ENCODE measurements at regions of chr3 and their contacts with region 1.

Region 1: DNA sequence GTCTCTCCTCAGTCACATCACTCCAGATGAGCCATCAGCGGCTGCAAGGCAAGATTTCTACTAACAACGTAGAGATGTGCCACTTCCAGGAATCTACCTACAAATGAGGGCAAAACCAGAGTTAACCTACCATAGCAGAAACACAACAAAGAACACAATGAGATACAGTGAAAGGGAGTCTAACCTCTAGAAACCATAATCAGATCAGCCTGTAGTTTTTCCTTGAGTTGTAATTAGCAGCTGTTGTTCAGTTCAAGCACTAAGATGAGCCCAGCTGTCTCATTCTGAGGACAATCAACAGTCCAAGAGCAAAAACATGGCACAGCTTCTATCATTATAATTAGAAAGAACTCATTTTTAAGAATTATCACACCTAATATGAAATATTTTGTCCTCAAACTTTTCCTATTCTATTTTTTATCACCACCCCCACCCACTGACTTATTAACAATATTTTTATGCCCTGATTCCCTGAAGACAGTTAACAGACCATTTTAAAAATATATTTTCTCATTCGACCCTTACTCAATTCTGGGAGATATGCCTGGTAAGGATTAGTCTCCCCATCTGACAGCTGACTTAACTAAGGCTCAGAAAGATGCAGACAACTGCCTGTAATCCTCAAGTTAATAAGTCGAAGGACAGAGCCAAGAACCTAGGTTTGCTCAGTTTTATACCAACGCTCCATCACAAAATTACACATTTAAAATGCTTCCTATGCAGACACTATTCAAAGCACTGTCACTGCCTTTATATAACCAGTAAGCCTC is 50.1 kb downstream of the MAGI1 start:
- DNase-seq: no peak
- H3K4me3 ChIP-seq: no peak overlapping the region
- H3K27ac ChIP-seq: no peak overlapping the region
- H3K4me1 ChIP-seq: no peaks in the 10 kb centered on the region
- H3K27me3 ChIP-seq: no peaks in the 10 kb centered on the region
- CTCF ChIP-seq: no peak
- EP300 ChIP-seq: no peak
- POLR2A ChIP-seq: no peak

Region 2: GRCh38 chr3:66021731-66022141 is 33.1 kb after region 1 on chr3:
- intact Hi-C with region 1: loop called in 1 of 4 experiments (anchors 1 kb)
- DNase-seq: no peak
- H3K4me3 ChIP-seq: no peak overlapping the region
- H3K27ac ChIP-seq: no peak overlapping the region
- H3K4me1 ChIP-seq: no peaks in the 10 kb centered on the region
- H3K27me3 ChIP-seq: no peaks in the 10 kb centered on the region
- CTCF ChIP-seq: no peak
- EP300 ChIP-seq: no peak
- POLR2A ChIP-seq: no peak